Transverse colon (tissue), 4 donors: ENCODE measurements at regions of chr15 and their contacts with region 1.

Region 1: DNA sequence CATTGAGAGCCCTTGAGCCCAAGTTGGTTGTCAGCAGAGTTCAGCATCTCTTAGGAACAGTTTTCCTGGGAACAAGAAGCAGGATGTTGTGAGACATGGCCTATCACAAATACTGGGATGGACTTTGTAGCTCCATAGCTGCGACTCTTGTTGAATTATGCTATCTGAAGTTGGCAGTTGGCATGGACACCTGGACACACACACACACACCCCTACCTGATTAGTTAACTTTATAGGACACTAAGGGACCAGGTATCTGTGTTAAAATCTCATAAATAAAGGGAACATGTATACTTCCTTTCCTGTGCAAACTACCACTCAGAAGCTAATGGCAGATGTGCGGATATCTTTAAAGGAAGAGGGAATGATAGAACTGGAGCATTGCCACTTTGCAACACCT is 10.2 kb upstream of the CHRNA7 start:
- DNase-seq: peak; percentile 18
- H3K4me3 ChIP-seq: no peak overlapping the region
- H3K27ac ChIP-seq: peak overlapping the region in 1 of 4 donors; percentile 28
- H3K4me1 ChIP-seq: peaks cover 0 to 8% (median 0%) of the 10 kb centered on the region in 4 donors
- H3K27me3 ChIP-seq: no peaks in the 10 kb centered on the region
- CTCF ChIP-seq: no peak
- EP300 ChIP-seq: no peak
- POLR2A ChIP-seq: no peak

Region 2: DNA sequence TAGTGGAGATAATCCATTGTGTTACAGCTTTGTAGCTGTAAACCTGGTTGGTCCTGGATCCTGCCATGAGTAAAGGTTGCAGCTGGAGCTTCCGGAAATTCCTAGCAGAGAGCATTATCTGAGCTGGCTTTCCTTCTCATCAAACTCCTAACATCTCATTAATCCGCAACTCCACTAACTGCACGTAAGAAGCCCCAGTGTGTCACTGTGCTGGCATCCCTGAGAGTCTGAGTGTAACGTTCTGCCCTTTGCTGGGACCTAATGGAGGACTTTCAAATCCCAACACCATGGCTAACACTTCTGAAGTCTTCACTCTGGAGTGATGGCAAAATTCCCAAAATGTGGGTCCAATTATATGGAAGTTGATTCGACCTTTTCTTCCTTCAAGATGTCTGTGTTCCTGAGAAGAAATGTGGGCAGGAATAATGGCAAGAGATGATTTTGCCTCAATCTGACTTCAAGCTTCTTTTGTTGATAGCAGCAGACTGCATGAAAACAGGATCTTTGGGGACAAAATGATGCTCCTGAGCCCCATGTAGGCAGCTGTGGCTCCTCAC is 909.0 kb before region 1 on chr15:
- in situ Hi-C with region 1: no loop called
- intact Hi-C with region 1: no loop called
- DNase-seq: no peak
- H3K4me3 ChIP-seq: no peak overlapping the region
- H3K27ac ChIP-seq: no peak overlapping the region
- H3K4me1 ChIP-seq: no peaks in the 10 kb centered on the region
- H3K27me3 ChIP-seq: no peaks in the 10 kb centered on the region
- CTCF ChIP-seq: no peak
- EP300 ChIP-seq: no peak
- POLR2A ChIP-seq: no peak

Region 3: GRCh38 chr15:32089851-32090359 is 69.7 kb after region 1 on chr15:
- in situ Hi-C with region 1: no loop called
- intact Hi-C with region 1: loop called (anchors 2 kb)
- DNase-seq: no peak
- H3K4me3 ChIP-seq: no peak overlapping the region
- H3K27ac ChIP-seq: no peak overlapping the region
- H3K4me1 ChIP-seq: no peaks in the 10 kb centered on the region
- H3K27me3 ChIP-seq: no peaks in the 10 kb centered on the region
- CTCF ChIP-seq: no peak
- EP300 ChIP-seq: no peak
- POLR2A ChIP-seq: no peak